ENCODE measurements at regions of chr18 and their contacts with region 1.

Region 1: GRCh38 chr18:44594799-44595467 is 85.8 kb upstream of the SETBP1 start:
- DNase-seq: peak; percentile 91
- H3K4me3 Mint-ChIP-seq: no peak overlapping the region
- H3K27ac Mint-ChIP-seq: no peak overlapping the region
- H3K4me1 Mint-ChIP-seq: peaks cover 39% of the 10 kb centered on the region
- H3K27me3 Mint-ChIP-seq: no peaks in the 10 kb centered on the region
- CTCF ChIP-seq: no peak

Region 2: GRCh38 chr18:44651453-44651852 is 56.5 kb after region 1 on chr18:
- CTCF ChIA-PET with region 1: interaction called, 6 read pairs
- POLR2A ChIA-PET with region 1: interaction called, 3 read pairs
- intact Hi-C with region 1: loop called (anchors 10 kb)
- DNase-seq: peak; percentile 73
- H3K4me3 Mint-ChIP-seq: no peak overlapping the region
- H3K27ac Mint-ChIP-seq: no peak overlapping the region
- H3K4me1 Mint-ChIP-seq: peaks cover 22% of the 10 kb centered on the region
- H3K27me3 Mint-ChIP-seq: no peaks in the 10 kb centered on the region
- CTCF ChIP-seq: no peak

Region 3: DNA sequence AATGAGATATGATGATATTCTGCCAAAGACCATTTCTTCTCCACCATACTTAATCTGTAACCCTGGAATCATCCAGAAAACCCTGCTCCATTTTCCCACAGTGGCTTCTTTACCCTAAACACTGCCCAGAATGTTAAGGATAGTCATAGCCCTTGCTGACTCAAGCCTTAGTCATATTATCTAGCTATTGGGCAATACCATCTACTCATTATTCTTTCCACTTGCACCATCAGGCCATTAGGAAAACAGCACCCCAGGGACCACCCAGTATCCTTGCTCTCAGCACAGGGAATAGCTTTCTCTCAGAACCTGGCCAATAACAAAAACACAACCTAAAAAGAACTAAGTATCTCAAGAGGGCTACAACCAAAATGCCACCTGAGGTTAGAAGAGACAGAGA is 574.7 kb after region 1 on chr18:
- CTCF ChIA-PET with region 1: no interaction called
- POLR2A ChIA-PET with region 1: no interaction called
- intact Hi-C with region 1: loop called (anchors 10 kb)
- DNase-seq: peak; percentile 93
- H3K4me3 Mint-ChIP-seq: no peak overlapping the region
- H3K27ac Mint-ChIP-seq: peak overlapping the region; percentile 93
- H3K4me1 Mint-ChIP-seq: peaks cover 41% of the 10 kb centered on the region
- H3K27me3 Mint-ChIP-seq: no peaks in the 10 kb centered on the region
- CTCF ChIP-seq: no peak

Measured in MCF 10A (cell line).